ENCODE measurements at regions of chr18 and their contacts with region 1.

Region 1: GRCh38 chr18:76875390-76876325 is 53.3 kb downstream of the ZNF236 start:
- DNase-seq: peak; percentile 57 to 89
- H3K4me3 ChIP-seq: no peak overlapping the region
- H3K27ac ChIP-seq: no peak overlapping the region
- H3K4me1 ChIP-seq: no peaks in the 10 kb centered on the region
- H3K27me3 ChIP-seq: no peaks in the 10 kb centered on the region
- CTCF ChIP-seq: peak in 5 of 7 experiments; percentile 9 to 72 (median 61)
- EP300 ChIP-seq: no peak
- POLR2A ChIP-seq: no peak

Region 2: DNA sequence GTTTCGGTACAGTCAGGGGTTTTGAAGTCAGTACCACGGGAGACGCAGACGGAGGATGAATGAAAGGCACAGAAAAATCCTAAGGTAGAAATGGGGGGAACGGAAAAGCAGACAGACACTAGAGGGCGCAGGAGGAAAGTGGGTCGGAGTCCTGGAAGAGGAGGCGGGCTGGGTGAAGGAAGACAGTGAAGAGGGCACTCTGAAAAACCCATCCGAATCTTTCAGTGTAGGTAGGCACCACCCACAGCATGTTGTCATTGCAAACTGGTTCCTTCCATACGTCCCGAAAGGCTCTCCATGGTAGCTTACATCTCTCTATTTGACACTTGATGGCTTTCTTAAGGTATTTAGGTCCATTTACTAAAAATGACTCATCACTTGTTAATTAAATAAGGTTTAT is 71.8 kb before region 1 on chr18:
- intact Hi-C with region 1: loop called (anchors 10 kb)
- DNase-seq: peak; percentile 67 to 81
- H3K4me3 ChIP-seq: no peak overlapping the region
- H3K27ac ChIP-seq: no peak overlapping the region
- H3K4me1 ChIP-seq: peaks cover 8 to 21% (median 16%) of the 10 kb centered on the region in 4 donors
- H3K27me3 ChIP-seq: peaks cover 0 to 9% (median 6%) of the 10 kb centered on the region in 3 donors
- CTCF ChIP-seq: peak in 5 of 7 experiments; percentile 54 to 76 (median 65)
- EP300 ChIP-seq: no peak
- POLR2A ChIP-seq: no peak